Activated T-helper 2 cell treated with anti-CD3 and anti-CD28 coated beads, Interferon-gamma antibody, Interleukin-2, Interleukin-4, amounts not matched to agents 10 μg/mL and 5 μg/mL and 100 μg/mL, durations not matched to agents 14 hours and 24 hours and 36 hours (primary cell): ENCODE measurements at regions of chr20 and their contacts with region 1.

Region 1: GRCh38 chr20:41232973-41233926 is 84.3 kb downstream of the ZHX3 start:
- DNase-seq: no peak
- H3K4me3 Mint-ChIP-seq: no peak overlapping the region
- H3K27ac Mint-ChIP-seq: no peak overlapping the region
- H3K4me1 Mint-ChIP-seq: peaks cover 35% of the 10 kb centered on the region
- H3K27me3 Mint-ChIP-seq: no peaks in the 10 kb centered on the region

Region 2: DNA sequence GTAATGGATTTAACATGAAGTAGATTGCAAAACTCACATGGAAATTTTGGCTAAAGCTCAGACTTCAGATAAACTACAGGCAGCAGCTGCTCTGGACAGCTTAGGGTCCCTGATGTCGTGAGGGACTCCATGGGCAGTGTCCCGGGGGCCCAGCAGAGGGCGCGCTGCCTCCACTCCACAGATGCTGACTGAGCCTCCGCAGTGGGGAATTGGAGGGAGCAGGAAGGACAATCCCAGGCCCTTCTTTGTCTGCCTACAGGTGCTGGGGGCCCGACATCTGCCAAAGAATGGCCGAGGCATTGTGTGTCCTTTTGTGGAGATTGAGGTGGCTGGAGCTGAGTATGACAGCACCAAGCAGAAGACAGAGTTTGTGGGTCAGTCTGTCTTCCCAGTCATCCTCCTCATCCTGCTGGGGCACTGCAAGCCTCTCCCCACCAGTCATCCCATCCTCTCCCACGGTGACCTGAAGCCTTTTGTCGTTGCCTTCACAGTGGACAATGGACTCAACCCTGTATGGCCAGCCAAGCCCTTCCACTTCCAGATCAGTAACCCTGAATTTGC is 60.0 kb before region 1 on chr20:
- intact Hi-C with region 1: loop called (anchors 1 kb)
- DNase-seq: no peak
- H3K4me3 Mint-ChIP-seq: no peak overlapping the region
- H3K27ac Mint-ChIP-seq: no peak overlapping the region
- H3K4me1 Mint-ChIP-seq: peaks cover 2% of the 10 kb centered on the region
- H3K27me3 Mint-ChIP-seq: no peaks in the 10 kb centered on the region

Region 3: GRCh38 chr20:41196653-41197225 is 36.5 kb before region 1 on chr20:
- intact Hi-C with region 1: loop called (anchors 5 kb)
- DNase-seq: no peak
- H3K4me3 Mint-ChIP-seq: no peak overlapping the region
- H3K27ac Mint-ChIP-seq: no peak overlapping the region
- H3K4me1 Mint-ChIP-seq: peaks cover 12% of the 10 kb centered on the region
- H3K27me3 Mint-ChIP-seq: no peaks in the 10 kb centered on the region

Region 4: GRCh38 chr20:41317536-41318270 is 84.5 kb after region 1 on chr20 and contains the start of gene ZHX3:
- intact Hi-C with region 1: loop called (anchors 5 kb)
- DNase-seq: peak; percentile 94
- H3K4me3 Mint-ChIP-seq: peak within 1 kb of the TSS; percentile 84
- H3K27ac Mint-ChIP-seq: peak within 1 kb of the TSS; percentile 70
- H3K4me1 Mint-ChIP-seq: peaks cover 26% of the 10 kb centered on the region
- H3K27me3 Mint-ChIP-seq: peaks cover 4% of the 10 kb centered on the region
- total RNA-seq, gene ZHX3: 8.2 and 11.4 TPM in 2 replicates

Region 5: DNA sequence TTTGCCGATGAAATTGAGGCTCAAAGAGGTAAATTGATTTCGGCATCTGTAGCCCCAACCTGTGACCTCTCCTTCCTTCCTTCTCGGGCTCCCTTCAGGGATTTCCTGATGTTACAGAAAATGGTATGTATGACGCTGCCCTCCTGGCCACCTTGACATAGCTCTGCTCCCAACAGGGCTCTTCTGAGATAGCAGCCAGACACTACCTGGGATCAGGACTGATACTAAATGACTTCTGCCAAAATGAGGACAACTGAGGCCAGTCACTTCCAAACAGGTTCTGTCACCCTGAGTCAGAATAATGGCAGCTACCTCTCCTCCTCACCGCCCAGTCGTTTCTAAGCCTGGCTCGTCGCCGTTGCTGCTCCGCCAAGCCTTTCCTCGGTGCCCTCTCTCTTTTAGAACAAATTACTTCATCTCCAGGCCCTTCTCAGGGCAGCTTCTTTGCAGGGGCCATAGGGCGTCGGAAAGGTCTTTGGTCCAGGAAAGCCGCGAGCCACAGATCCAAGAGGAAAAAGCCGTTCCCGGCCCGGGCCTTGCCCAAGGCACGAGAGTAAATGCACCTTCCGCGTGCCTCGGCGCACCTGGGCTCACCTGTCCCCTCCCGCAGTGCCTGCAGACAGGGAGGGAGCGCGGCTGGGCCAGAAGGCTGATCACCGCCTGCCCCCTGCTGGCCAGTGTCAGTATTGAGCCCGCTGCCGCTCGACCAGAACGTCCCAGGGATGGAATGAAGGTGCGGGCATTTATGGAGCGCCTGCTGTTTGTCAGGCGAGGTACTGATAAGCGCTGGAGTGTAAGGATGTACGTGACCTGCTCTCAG is 106.5 kb after region 1 on chr20:
- intact Hi-C with region 1: loop called (anchors 1 kb)
- DNase-seq: peak; percentile 77
- H3K4me3 Mint-ChIP-seq: peak overlapping the region; percentile 77
- H3K27ac Mint-ChIP-seq: no peak overlapping the region
- H3K4me1 Mint-ChIP-seq: peaks cover 10% of the 10 kb centered on the region
- H3K27me3 Mint-ChIP-seq: peaks cover 8% of the 10 kb centered on the region